Activated T-helper 1 cell treated with anti-CD3 and anti-CD28 coated beads, Interleukin-12 subunit alpha, Interleukin-12 subunit beta, Interleukin-2, Interleukin-4 antibody, amounts not matched to agents 30 ng/mL and 10 ng/mL and 1 ng/mL, durations not matched to agents 14 hours and 24 hours and 36 hours (primary cell): ENCODE measurements at regions of chr22 and their contacts with region 1.

Region 1: DNA sequence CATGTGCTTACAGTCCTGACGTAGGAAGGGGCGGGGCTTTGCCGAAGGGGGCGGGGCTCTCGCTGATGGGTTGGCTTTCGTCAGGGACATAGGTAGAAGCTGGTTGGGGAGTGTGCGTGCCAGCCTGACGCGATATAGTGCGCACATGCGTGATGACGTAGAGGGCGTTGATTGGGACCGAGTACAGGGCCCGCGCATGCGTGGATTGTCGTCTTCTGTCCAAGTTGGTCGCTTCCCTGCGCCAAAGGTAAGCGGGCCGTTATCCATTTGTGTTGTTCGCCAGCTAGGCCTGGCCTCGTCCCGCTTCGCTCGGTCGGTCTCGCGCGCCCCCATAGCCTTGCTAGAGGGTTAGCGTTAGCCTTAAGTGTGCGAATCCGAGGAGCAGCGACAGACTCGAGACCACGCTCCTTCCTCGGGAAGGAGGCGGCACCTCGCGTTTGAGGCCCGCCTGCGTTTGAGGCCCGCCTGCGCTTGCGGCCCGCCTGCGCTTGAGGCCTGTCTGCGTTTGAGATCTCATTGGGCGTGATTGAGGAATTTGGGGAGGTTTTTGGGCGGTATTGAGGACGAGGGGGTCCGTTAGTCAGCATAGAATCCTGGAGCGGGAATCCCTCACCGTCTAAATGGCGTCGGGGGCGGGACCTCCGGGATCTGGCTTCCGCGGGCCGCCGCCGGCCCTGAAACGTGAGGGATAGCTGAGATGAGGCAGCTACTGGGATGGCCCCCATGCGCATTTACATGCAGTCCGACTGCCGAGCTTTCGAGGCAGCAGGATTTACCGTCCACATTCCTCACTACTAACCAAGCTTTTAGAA is at the start of gene XRCC6:
- DNase-seq: peak; percentile 97
- H3K4me3 Mint-ChIP-seq: peak within 1 kb of the TSS; percentile 93
- H3K27ac Mint-ChIP-seq: peak within 1 kb of the TSS; percentile 94
- H3K4me1 Mint-ChIP-seq: peaks cover 50% of the 10 kb centered on the region
- H3K27me3 Mint-ChIP-seq: no peaks in the 10 kb centered on the region
- total RNA-seq, gene XRCC6: 367 and 368 TPM in 2 replicates

Region 2: GRCh38 chr22:41285820-41286638 is 335.3 kb before region 1 on chr22 and contains the start of gene RANGAP1:
- intact Hi-C with region 1: loop called (anchors 1 kb)
- DNase-seq: peak; percentile 98
- H3K4me3 Mint-ChIP-seq: peak within 1 kb of the TSS; percentile 95
- H3K27ac Mint-ChIP-seq: peak within 1 kb of the TSS; percentile 97
- H3K4me1 Mint-ChIP-seq: peaks cover 34% of the 10 kb centered on the region
- H3K27me3 Mint-ChIP-seq: no peaks in the 10 kb centered on the region
- total RNA-seq, gene RANGAP1: 197 and 199 TPM in 2 replicates

Region 3: DNA sequence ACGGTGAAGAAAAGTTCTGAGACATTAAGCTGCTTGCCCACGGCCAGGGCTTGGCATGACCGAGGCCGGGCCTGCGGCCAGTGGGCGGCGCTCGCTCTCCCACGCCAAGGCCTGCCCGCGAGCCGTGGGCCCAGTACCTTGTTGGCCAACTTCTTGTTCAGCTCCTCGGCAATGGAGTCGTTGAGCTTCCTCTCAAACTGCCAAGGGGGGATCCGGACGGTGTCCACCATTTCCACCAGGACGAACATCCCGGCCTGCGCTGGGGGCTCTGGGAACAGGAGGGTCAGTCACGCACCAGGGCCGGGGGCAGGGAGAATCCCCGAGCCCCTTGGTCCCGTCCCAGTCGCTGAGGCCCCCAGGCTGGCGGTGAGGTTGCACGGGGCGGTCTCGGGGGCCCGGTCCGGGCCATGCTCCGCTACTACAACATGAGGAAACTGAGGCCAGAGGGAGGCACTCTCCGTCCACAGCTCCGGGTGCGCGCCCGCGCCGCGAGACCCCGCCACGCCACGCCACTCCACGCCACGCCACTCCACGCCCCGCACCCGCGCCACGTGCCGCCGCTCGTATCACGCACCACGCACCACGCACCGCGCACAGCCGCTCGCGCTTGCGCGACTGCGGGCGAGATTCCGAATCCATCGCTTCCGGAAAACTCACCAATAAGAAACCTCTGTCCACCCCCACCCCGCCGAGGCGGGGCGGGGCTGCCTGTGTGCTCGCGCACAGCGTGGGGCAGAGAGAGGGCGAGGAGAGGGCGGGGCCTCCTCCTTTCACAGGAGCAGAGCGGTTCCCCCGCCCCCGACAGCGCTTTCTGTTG is 77.2 kb before region 1 on chr22 and contains the start of gene POLR3H:
- intact Hi-C with region 1: loop called (anchors 1 kb)
- DNase-seq: peak; percentile 97
- H3K4me3 Mint-ChIP-seq: peak within 1 kb of the TSS; percentile 93
- H3K27ac Mint-ChIP-seq: peak within 1 kb of the TSS; percentile 84
- H3K4me1 Mint-ChIP-seq: peaks cover 40% of the 10 kb centered on the region
- H3K27me3 Mint-ChIP-seq: peaks cover 3% of the 10 kb centered on the region
- total RNA-seq, gene POLR3H: 51.8 and 52.0 TPM in 2 replicates

Region 4: GRCh38 chr22:41596776-41597634 is 24.3 kb before region 1 on chr22:
- intact Hi-C with region 1: no loop called
- DNase-seq: no peak
- H3K4me3 Mint-ChIP-seq: no peak overlapping the region
- H3K27ac Mint-ChIP-seq: no peak overlapping the region
- H3K4me1 Mint-ChIP-seq: peaks cover 20% of the 10 kb centered on the region
- H3K27me3 Mint-ChIP-seq: peaks cover 3% of the 10 kb centered on the region

Region 5: DNA sequence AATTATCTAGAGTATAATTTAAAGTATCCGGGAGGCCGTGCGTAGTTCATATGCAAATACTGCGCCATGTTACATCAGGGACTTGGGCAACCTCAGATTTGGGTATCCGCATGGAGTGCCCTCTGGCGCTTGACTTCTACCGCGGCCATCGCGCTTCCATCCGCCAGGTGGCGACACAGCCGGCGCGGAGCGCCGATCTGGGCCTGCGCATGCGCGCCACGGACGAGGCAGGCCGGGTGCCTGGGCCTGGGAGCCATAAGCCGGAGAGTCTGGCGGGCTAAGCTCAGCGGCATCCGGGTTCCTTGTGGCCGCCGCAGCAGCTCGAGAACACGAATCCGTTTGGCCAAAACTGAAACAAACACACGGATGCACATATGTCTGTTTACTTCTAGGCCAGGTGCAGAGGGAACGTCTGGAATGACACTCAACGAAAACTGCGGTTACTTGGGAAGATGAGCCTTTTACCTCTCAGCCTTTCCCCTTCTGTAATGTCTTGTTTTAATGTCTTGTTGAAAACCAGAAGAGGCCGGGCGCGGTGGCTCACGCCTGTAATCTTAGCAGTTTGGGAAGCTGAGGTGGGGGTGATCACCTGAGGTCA is 45.5 kb after region 1 on chr22:
- intact Hi-C with region 1: loop called (anchors 1 kb)
- DNase-seq: peak; percentile 96
- H3K4me3 Mint-ChIP-seq: peak overlapping the region; percentile 81
- H3K27ac Mint-ChIP-seq: peak overlapping the region; percentile 95
- H3K4me1 Mint-ChIP-seq: peaks cover 17% of the 10 kb centered on the region
- H3K27me3 Mint-ChIP-seq: no peaks in the 10 kb centered on the region

Region 6: GRCh38 chr22:41780746-41781505 is 159.6 kb after region 1 on chr22:
- intact Hi-C with region 1: loop called (anchors 2 kb)
- DNase-seq: peak; percentile 90
- H3K4me3 Mint-ChIP-seq: peak overlapping the region; percentile 83
- H3K27ac Mint-ChIP-seq: peak overlapping the region; percentile 91
- H3K4me1 Mint-ChIP-seq: peaks cover 41% of the 10 kb centered on the region
- H3K27me3 Mint-ChIP-seq: peaks cover 2% of the 10 kb centered on the region

Region 7: GRCh38 chr22:42079319-42080251 is 458.3 kb after region 1 on chr22 and contains the start of gene SMDT1:
- intact Hi-C with region 1: loop called (anchors 10 kb)
- DNase-seq: peak; percentile 98
- H3K4me3 Mint-ChIP-seq: peak within 1 kb of the TSS; percentile 89
- H3K27ac Mint-ChIP-seq: peak within 1 kb of the TSS; percentile 92
- H3K4me1 Mint-ChIP-seq: peaks cover 34% of the 10 kb centered on the region
- H3K27me3 Mint-ChIP-seq: no peaks in the 10 kb centered on the region
- total RNA-seq, gene SMDT1: 53.9 and 58.2 TPM in 2 replicates